ENCODE measurements at regions of chr11 and their contacts with region 1.

Region 1: GRCh38 chr11:64652586-64653387 is 61.8 kb downstream of the SLC22A12 start:
- DNase-seq: peak; percentile 80
- ATAC-seq: peak; percentile 76 to 81

Region 2: GRCh38 chr11:64448599-64449556 is 203.9 kb before region 1 on chr11:
- intact Hi-C with region 1: loop called (anchors 2 to 10 kb)
- DNase-seq: peak; percentile 87
- ATAC-seq: peak; percentile 95 to 97

Region 3: DNA sequence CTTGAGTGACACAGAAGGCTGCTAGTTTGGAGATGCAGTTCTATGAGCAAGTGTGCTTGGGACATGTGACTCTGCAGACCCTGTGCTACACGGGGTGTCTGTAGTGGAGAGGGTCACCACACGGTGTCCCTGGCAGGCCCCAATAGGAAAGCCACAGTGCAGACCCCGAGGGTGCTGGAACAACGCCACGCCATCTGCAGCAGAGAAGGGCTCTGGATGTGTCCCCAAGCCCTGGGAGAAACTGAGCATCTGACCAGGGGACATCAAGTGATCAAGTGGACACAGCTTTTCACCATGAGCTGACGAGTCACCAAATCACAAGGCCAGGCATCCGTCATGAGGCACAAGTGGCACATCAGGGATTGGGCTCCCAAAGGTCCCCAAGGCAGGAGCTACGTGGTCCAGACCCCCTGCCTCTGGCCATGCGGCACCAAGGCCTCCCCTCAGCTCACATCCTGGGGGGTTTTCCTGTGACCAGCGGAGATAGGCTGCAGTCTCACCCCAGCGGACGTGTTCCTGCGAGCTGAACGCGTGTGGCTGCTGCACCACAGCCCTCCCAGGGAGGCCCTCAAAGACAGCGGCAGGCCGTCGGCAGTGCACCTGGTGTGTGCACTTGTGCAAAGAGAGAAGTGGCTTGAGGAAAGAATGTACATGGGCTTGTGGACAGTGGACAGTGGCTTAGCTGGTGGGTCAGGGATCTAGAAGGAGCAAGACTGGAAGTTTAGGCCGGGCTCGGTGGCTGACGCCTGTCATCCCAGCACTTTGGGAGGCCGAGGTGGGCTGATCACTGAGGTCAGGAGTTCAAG is 197.1 kb before region 1 on chr11:
- intact Hi-C with region 1: loop called (anchors 2 to 10 kb)
- DNase-seq: no peak
- ATAC-seq: no peak

Region 4: DNA sequence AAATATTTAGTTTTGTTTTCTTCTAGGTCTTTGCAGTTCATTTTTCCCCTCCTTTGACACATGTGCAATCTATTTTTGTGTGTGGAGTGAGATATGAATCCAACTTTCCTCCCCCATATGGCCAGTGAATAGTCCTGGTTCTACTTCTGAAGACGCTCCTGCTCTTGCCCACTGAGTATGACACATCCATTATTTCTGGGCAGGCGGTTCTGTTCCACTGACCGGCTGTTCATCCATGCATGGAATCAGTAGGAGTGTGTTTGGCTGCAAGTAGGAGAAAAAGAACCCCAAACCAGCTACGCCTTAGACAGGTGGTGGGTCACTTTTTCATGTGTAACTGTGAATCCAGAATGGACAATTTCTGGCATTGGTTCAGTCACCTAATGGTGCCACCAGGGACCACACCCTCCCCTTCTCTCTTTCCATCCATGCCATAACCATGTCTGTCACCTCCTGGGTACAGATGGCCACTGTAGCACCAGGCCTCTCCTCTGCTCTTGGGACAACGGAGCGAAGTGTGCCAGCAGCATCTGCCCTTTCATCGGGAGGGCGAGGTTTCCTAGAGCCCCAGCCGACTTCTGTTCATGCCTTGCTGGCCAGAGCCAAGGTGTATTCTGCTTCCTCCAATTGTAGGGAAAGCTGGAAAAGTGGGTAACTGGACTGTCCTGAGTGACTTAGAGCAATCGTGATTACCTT is 129.2 kb before region 1 on chr11:
- intact Hi-C with region 1: no loop called
- DNase-seq: no peak
- ATAC-seq: no peak

Region 5: GRCh38 chr11:64553551-64554201 is 99.1 kb before region 1 on chr11:
- intact Hi-C with region 1: loop called in 1 of 2 experiments (anchors 1 kb)
- DNase-seq: peak; percentile 69
- ATAC-seq: peak; percentile 53 to 75

Region 6: GRCh38 chr11:65646921-65647751 is 994.3 kb after region 1 on chr11:
- intact Hi-C with region 1: no loop called
- DNase-seq: no peak
- ATAC-seq: peak; percentile 28 to 43

Measured in left cardiac atrium (tissue), 4 donors.